ENCODE measurements at regions of chr2 and their contacts with region 1.

Region 1: DNA sequence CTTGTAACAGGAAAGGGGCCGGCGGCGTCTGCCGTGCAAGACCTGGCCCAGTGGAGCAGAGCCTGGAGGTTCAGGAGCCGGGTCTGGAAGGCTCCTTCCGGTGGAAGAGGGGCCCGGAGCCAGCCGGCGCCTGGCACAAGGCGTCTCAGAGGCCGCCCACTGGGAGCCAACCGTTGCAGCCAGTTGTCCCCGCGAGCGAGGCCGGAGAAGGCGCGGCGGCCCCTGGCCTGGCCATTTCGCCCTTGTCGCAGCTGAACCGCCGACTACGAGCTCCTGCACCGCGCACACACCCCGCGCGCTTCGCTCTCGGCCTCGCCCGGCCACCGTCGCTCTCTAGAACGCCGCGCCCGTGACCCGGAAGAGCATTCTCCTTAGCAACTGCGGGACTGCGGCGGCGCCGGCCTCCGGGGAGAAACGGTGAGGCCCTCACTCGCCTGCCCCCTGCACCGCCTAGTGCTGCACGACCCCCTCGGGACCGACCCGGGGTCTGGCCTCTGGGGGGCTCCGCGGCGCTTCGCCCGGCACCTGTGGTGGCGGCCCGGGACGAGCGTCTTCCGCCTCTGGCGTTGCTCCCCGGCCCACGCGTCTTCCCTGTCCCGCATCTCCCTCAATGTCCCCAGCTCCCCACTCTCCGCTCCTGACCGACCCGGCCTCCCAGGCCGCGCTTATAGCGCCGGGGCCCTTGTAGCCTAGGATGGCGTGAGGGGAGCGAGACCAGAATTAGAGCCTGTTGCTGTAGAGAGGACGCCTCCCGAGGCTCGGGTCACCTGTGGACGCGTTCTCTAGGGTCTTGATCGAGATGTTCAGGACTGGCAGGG is at the start of gene DIS3L2:
- DNase-seq: peak; percentile 52 to 67
- ATAC-seq: peak; percentile 96 to 97
- H3K4me3 ChIP-seq: peak within 1 kb of the TSS; percentile 77 to 93 (median 92)
- H3K27ac ChIP-seq: peak within 1 kb of the TSS; percentile 76 to 91 (median 86)
- H3K4me1 ChIP-seq: peaks cover 23 to 28% of the 10 kb centered on the region in 2 donors
- H3K27me3 ChIP-seq: no peaks in the 10 kb centered on the region
- CTCF ChIP-seq: peak in 1 of 5 experiments; percentile 6
- POLR2A ChIP-seq: peak; percentile 40 to 59
- total RNA-seq, gene DIS3L2: 12.8 to 27.3 (median 16.8) TPM

Region 2: DNA sequence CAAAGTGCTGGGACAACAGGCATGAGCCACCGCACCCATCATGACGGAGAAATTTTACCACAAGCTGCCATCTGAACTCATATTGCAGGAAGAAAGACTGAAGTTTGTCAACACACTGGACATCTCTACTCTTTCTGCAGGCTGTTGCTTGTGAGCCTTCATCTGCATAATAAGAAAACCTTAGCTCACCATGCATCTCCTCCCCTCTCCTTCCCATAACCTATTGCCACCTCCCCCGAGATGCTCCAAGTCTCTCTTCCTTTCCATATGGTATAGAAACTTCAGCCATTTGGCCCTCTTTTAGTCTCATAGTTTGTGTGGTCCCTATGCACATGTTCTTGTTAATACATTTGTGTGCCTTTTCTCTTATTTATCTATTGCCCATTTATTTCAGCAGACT is 943.4 kb before region 1 on chr2:
- in situ Hi-C with region 1: no loop called
- intact Hi-C with region 1: no loop called
- DNase-seq: no peak
- ATAC-seq: no peak
- H3K4me3 ChIP-seq: no peak overlapping the region
- H3K27ac ChIP-seq: no peak overlapping the region
- H3K4me1 ChIP-seq: no peaks in the 10 kb centered on the region
- H3K27me3 ChIP-seq: no peaks in the 10 kb centered on the region
- CTCF ChIP-seq: no peak
- POLR2A ChIP-seq: no peak

Region 3: DNA sequence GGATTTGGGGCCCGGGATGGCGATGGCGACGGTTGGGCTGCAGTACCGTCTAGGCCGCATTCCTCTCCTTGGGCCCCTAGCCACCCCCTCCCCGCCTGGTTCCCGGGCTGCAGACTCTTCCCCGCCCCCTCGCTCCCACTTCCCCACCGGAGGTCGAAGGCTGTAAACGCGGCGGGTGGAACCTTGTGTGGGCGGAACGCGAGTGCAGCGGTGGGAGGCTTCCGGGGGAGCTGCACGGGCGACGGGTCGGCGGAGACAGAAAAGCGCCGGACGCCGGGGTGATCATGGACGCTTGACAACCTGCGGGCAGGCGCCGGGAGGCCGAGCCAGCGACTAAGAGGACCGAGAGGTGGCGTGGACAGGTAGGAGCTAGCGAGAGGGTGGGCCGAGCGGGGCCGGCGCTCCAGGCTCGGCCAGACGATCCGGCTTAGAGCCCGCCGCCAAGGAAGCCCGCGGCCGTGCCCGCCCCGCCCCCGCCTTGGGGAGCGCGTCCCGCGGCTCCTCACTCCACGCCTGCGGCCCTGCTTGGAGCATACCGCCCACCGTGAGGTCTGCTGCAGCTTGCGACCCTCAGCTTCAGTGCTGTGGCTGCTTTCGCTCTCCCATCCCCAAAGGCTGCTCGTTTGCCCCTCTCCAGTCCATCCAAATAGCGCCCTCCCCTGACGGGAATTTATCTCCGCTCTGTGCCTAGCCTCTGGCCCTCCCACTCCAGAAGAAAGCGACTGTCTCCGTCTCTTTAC is 175.2 kb before region 1 on chr2 and contains the start of gene COPS7B:
- in situ Hi-C with region 1: no loop called
- intact Hi-C with region 1: loop called (anchors 2 kb)
- DNase-seq: peak; percentile 58 to 63
- ATAC-seq: peak; percentile 75 to 81
- H3K4me3 ChIP-seq: peak within 1 kb of the TSS; percentile 71 to 100 (median 90)
- H3K27ac ChIP-seq: peak within 1 kb of the TSS; percentile 52 to 91 (median 81)
- H3K4me1 ChIP-seq: peaks cover 40 to 53% of the 10 kb centered on the region in 2 donors
- H3K27me3 ChIP-seq: no peaks in the 10 kb centered on the region
- CTCF ChIP-seq: peak; percentile 6 to 46 (median 23)
- POLR2A ChIP-seq: no peak
- total RNA-seq, gene COPS7B: 14.8 to 24.1 (median 19.4) TPM

Region 4: GRCh38 chr2:232190796-232191195 is 229.2 kb after region 1 on chr2:
- in situ Hi-C with region 1: no loop called
- intact Hi-C with region 1: no loop called
- DNase-seq: no peak
- ATAC-seq: no peak
- H3K4me3 ChIP-seq: no peak overlapping the region
- H3K27ac ChIP-seq: no peak overlapping the region
- H3K4me1 ChIP-seq: no peaks in the 10 kb centered on the region
- H3K27me3 ChIP-seq: no peaks in the 10 kb centered on the region
- CTCF ChIP-seq: no peak
- POLR2A ChIP-seq: no peak

Measured in gastrocnemius medialis (tissue), 4 donors.